ENCODE measurements at regions of chr17 and their contacts with region 1.

Region 1: DNA sequence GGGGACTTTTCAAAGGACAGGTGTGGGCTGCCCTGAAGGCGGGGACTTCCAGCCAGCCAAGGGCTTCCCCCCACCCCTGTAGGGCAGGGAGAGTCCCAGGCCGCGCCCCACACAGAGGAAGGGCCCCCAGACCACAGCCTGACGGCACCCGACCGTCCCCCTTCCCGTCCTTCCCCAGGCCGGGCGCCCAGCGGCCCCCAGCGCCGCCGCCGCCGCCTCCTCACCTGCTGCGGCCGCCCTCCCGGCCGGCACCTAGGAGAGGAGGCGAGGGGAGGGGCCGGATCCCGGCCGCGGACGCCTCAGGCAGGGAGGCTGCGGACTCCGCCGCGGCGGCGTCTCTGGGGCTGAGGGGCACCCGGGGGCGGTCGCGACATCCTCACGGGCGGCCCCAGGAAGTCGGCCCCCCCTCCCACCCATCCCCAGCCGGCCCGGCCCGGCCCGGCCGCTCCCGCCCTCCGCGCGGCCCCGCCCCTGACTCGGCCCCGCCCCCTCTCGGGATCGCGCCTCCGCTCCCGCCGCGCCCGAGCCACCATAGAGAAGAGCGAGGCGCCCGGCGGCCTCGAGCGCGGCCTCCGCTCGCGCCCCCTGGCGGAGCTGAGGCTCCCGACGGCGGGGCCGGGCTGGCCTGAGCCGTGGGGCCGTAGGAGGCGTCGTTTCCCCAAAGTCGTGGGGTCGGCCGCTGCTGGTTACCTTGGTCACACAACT is 25.5 kb upstream of the RFFL start:
- DNase-seq: peak; percentile 91 to 92
- ATAC-seq: peak; percentile 95 to 98 (median 97)
- H3K4me3 ChIP-seq: peak overlapping the region; percentile 98
- H3K27ac ChIP-seq: peak overlapping the region; percentile 47
- H3K4me1 ChIP-seq: peaks cover 11% of the 10 kb centered on the region
- H3K27me3 ChIP-seq: no peaks in the 10 kb centered on the region
- CTCF ChIP-seq: peak; percentile 78

Region 2: GRCh38 chr17:34998205-34998604 is 90.8 kb before region 1 on chr17:
- intact Hi-C with region 1: loop called (anchors 1 to 5 kb)
- DNase-seq: peak; percentile 68 to 79
- ATAC-seq: peak; percentile 82 to 95 (median 88)
- H3K4me3 ChIP-seq: no peak overlapping the region
- H3K27ac ChIP-seq: peak overlapping the region; percentile 39
- H3K4me1 ChIP-seq: peaks cover 5% of the 10 kb centered on the region
- H3K27me3 ChIP-seq: no peaks in the 10 kb centered on the region
- CTCF ChIP-seq: peak; percentile 66

Region 3: GRCh38 chr17:35022536-35023063 is 66.4 kb before region 1 on chr17:
- intact Hi-C with region 1: no loop called
- DNase-seq: peak; percentile 72 to 79
- ATAC-seq: peak; percentile 82 to 94 (median 93)
- H3K4me3 ChIP-seq: no peak overlapping the region
- H3K27ac ChIP-seq: peak overlapping the region; percentile 50
- H3K4me1 ChIP-seq: peaks cover 13% of the 10 kb centered on the region
- H3K27me3 ChIP-seq: no peaks in the 10 kb centered on the region
- CTCF ChIP-seq: no peak

Region 4: DNA sequence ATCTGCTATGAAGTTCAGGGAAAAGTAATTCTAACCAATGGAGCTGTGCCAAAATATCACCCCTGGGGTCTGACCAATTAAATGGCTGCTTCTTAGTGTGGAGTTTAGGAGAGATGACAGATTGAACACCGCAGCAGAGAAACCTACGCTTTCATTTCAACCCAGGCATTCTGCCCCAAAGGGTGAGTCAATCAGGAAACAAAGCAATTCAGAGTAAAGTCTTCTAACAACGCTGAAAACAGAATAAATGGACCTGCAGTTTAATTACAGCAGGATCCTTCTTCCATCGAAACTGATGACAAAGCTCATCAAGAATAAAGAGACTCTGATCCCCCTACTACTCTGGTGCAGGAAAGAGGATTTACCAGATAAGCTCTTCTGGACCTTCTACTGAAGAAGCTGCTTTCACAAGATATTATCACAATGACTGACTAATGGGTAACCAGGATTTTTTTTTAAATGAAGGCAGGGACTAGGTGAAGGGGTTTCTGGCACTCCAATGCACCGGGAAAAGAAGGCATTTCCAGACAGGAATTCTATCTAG is 42.2 kb before region 1 on chr17:
- intact Hi-C with region 1: no loop called
- DNase-seq: no peak
- ATAC-seq: no peak
- H3K4me3 ChIP-seq: no peak overlapping the region
- H3K27ac ChIP-seq: no peak overlapping the region
- H3K4me1 ChIP-seq: peaks cover 11% of the 10 kb centered on the region
- H3K27me3 ChIP-seq: no peaks in the 10 kb centered on the region
- CTCF ChIP-seq: no peak

Region 5: DNA sequence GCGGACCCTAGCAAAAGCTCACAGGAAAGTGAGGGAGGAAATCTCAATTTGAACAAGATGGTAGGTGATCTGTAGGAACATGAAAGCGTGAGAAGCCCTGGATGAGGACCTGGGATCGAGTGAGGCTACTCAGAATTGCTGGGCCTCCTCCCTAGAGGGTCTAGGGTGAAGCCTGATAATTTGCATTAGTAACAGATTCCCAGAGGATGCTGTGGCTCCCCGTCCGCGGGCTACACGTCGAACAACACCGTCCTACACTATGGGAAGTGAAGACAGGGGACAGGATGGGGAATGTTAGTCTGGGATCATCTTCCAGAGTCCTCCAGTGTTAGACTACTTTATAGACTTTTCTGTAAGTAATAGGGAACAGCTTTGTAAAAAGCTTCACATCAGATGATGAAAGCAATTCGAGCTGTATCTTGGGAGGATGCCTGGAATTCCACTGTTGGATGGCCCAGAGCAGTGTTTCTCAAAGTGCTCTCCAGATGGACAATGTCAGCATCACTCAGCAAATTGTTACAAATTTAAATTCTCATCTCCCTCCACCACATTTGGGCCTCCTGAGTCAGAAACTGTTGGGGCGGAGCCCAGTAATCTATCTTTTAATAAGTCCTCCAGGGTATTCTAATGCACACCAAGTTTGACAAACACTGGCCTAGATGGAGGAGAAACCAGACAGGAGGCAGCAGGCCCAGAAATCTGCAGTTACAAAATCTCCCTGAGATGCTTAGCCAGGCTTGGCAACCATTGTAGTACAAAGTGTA is 38.9 kb after region 1 on chr17:
- intact Hi-C with region 1: no loop called
- DNase-seq: peak in 1 of 2 donors; percentile 22
- ATAC-seq: peak in 1 of 4 donors; percentile 33
- H3K4me3 ChIP-seq: no peak overlapping the region
- H3K27ac ChIP-seq: no peak overlapping the region
- H3K4me1 ChIP-seq: no peaks in the 10 kb centered on the region
- H3K27me3 ChIP-seq: no peaks in the 10 kb centered on the region
- CTCF ChIP-seq: no peak

Region 6: DNA sequence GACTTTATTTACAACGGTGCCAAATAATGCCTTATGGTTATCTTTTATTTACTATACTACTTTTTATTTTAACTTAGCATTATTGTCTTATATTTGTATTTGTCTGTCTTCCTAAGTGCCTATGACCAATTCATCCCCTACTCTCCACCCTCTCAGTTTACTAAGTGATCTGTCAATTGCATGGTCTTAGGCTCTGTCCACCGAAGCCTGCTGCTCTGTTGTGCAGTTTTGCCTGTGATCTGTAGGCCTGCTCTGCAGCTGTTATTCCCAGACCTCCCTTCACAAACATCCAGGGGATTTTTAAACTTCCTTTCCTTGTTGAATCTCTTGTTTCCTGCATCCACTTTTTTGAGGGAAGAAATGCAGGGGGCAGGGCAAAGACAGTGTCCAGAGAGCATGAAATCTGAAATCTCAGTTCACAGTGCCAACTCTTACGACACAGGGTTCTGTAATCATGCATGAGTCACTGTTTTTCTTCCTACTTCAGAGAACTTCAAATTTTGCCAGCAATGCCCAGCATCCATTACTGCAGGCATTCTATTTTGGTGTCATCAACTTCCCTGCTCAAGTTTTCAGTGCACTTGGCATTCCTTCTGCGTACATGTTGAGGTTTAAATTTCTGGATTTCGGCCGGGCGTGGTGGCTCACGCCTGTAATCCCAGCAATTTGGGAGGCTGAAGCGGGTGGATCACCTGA is 165.2 kb after region 1 on chr17:
- intact Hi-C with region 1: no loop called
- DNase-seq: peak in 1 of 2 donors; percentile 36
- ATAC-seq: peak; percentile 80 to 93 (median 91)
- H3K4me3 ChIP-seq: no peak overlapping the region
- H3K27ac ChIP-seq: peak overlapping the region; percentile 32
- H3K4me1 ChIP-seq: peaks cover 27% of the 10 kb centered on the region
- H3K27me3 ChIP-seq: no peaks in the 10 kb centered on the region
- CTCF ChIP-seq: no peak